OCI-LY7 (cell line): ENCODE measurements at regions of chr5 and their contacts with region 1.

Region 1: GRCh38 chr5:112921833-112922817 is at the start of gene REEP5:
- DNase-seq: peak; percentile 90
- H3K4me3 ChIP-seq: peak within 1 kb of the TSS; percentile 85
- H3K27ac ChIP-seq: peak within 1 kb of the TSS; percentile 92
- H3K4me1 ChIP-seq: peaks cover 70% of the 10 kb centered on the region
- CTCF ChIP-seq: peak; percentile 82
- total RNA-seq, gene REEP5: 20.9 and 25.5 TPM in 2 replicates

Region 2: DNA sequence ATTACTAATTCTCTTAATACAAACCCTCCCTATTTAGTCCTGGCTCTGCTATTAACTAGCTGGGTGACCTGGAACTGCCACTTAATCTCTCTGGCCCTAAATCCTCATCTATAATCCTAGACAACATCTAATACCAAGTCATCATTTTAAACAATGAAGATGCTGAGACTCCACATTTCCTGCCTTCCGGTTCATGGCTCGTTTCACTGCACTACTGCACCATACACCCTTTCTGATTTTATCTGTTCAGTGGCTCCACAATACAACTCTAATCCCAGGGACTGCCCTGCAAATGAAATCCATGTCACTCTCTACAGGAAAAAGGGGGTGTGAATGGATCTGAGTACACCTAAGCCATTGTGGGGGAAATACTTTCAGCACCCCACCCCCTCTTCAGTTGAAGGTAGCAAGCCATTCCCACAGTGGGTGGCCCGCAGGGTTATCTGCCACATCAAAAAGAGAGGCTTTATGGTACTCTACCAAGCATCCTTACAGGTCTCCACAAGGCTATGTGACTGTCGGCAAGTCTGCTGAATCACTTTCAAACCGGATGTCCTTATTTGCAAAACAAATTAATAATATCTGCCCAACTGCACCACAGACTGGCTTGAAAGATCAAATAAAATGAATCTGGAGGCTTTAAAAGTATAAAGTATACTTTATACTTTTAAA is 592.6 kb before region 1 on chr5:
- CTCF ChIA-PET with region 1: no interaction called
- POLR2A ChIA-PET with region 1: no interaction called
- intact Hi-C with region 1: no loop called
- DNase-seq: peak; percentile 64
- H3K4me3 ChIP-seq: peak overlapping the region; percentile 47
- H3K27ac ChIP-seq: peak overlapping the region; percentile 42
- H3K4me1 ChIP-seq: peaks cover 28% of the 10 kb centered on the region
- CTCF ChIP-seq: no peak

Region 3: DNA sequence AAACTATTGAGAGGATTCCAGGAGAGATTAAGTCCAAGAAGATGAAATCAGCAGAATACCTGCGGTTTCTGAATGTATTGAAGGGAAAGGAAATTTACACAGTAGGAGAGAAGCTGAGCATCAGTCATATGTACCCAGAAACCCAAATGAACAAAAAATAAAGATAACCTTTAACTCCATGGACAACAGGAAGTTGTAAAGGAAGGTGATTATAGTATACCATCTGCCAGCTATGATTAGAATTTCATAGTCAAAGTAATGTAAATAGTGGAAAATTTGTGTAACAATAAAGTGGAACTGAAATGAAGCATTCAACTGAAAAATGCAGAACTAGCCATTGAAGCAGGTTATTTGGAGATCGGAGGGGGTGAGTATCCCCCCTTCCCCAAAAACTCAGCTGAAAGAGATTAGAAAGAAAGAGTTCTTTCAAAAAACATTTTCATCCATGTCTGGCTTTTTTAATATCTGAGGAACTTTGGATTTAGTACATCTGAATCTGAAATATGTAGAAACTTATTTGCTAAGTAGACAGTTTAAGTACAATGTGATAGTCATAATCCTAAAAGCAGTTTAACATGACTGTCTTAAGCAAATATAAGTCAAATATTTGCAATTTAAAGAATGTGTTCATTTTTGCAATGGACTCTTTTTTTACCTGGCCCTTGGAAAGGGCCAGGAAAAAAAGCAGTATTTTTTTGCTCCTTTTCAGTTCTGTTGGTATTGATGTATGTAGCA is 126.0 kb before region 1 on chr5:
- CTCF ChIA-PET with region 1: no interaction called
- POLR2A ChIA-PET with region 1: interaction called, 5 read pairs
- intact Hi-C with region 1: loop called (anchors 10 kb)
- DNase-seq: peak; percentile 74
- H3K4me3 ChIP-seq: peak overlapping the region; percentile 54
- H3K27ac ChIP-seq: peak overlapping the region; percentile 88
- H3K4me1 ChIP-seq: peaks cover 36% of the 10 kb centered on the region
- CTCF ChIP-seq: no peak

Region 4: DNA sequence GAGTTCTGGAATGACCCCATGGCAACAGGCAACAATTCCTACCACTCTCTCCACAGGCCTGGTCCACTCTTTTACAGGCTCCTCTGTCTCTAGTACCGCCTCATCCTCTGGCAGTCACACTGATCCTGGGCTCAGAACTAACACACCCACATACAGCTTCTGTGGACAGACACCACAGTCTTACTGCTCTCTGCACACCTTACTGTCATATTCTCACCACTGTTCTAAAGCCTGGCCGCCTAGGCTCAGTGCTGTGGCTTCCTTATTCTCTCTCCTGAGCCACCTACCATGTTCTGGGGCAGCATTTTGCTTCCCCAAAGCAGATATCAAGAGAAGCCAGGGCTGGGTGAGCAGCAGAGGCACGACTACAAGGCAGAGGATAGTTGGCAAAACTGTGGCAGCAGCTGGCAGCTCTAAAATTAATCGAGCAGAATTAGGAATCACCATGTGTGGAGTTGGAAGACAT is 14.9 kb before region 1 on chr5:
- CTCF ChIA-PET with region 1: interaction called, 3 read pairs
- POLR2A ChIA-PET with region 1: interaction called, 20 read pairs
- intact Hi-C with region 1: no loop called
- DNase-seq: no peak
- H3K4me3 ChIP-seq: no peak overlapping the region
- H3K27ac ChIP-seq: no peak overlapping the region
- H3K4me1 ChIP-seq: no peaks in the 10 kb centered on the region
- CTCF ChIP-seq: no peak

Region 5: GRCh38 chr5:112976432-112977309 is 54.5 kb after region 1 on chr5 and contains the start of gene DCP2:
- CTCF ChIA-PET with region 1: no interaction called
- POLR2A ChIA-PET with region 1: interaction called, 13 read pairs
- intact Hi-C with region 1: loop called (anchors 1 kb)
- DNase-seq: peak; percentile 100
- H3K4me3 ChIP-seq: peak within 1 kb of the TSS; percentile 92
- H3K27ac ChIP-seq: peak within 1 kb of the TSS; percentile 73
- H3K4me1 ChIP-seq: peaks cover 36% of the 10 kb centered on the region
- CTCF ChIP-seq: no peak
- total RNA-seq, gene DCP2: 69.3 and 81.3 TPM in 2 replicates

Region 6: DNA sequence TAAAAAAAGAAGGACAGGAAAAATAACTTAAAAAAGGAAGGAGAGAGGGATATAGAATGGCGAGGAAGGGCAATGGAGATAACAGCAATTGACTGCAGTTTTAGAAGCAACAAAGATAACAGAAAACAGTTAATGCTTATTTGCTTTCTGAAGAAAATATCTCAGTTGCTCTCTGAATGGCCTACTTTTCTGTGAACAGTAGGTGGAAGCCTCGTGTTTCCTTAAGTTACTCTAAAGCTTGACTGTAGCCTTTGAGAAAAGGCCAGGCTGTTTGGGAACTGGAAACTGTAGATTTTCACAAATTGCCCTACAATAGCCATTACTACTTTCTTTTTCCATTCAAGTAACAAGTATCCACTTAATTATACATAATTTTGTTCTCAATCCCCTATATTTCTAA is 995.9 kb after region 1 on chr5:
- CTCF ChIA-PET with region 1: no interaction called
- POLR2A ChIA-PET with region 1: no interaction called
- intact Hi-C with region 1: no loop called
- DNase-seq: no peak
- H3K4me3 ChIP-seq: no peak overlapping the region
- H3K27ac ChIP-seq: no peak overlapping the region
- H3K4me1 ChIP-seq: no peaks in the 10 kb centered on the region
- CTCF ChIP-seq: no peak